ENCODE measurements at regions of chr17 and their contacts with region 1.

Region 1: DNA sequence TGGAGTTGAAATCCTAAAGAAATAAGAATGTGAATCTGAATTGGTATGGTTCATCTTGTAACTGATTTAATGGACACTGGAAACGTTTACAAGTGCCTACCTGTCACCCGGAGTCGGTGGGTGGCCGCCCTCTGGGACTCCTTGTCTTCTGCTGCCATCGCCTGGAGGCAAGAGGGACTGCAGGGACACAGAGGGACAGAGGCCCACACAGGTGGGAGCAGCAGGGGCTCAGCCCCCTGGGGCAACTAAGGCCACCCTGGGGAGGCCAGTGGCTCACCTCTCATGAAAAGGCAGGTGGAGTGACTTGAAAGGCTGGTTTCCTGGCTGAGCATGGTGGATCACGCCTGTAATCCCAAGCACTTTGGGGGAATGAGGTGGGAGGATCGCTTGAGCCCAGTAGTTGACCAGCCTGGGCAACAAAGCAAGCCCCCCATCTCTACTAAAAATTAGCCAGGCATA is 23.2 kb downstream of the TMEM92 start:
- DNase-seq: peak; percentile 69
- H3K4me3 ChIP-seq: no peak overlapping the region
- H3K27ac ChIP-seq: no peak overlapping the region
- H3K4me1 ChIP-seq: no peaks in the 10 kb centered on the region
- H3K27me3 ChIP-seq: no peaks in the 10 kb centered on the region
- CTCF ChIP-seq: peak; percentile 93

Region 2: GRCh38 chr17:50026901-50027630 is 270.4 kb before region 1 on chr17:
- CTCF ChIA-PET with region 1: no interaction called
- POLR2A ChIA-PET with region 1: no interaction called
- intact Hi-C with region 1: loop called (anchors 5 kb)
- DNase-seq: peak; percentile 67
- H3K4me3 ChIP-seq: no peak overlapping the region
- H3K27ac ChIP-seq: no peak overlapping the region
- H3K4me1 ChIP-seq: peaks cover 8% of the 10 kb centered on the region
- H3K27me3 ChIP-seq: no peaks in the 10 kb centered on the region
- CTCF ChIP-seq: peak; percentile 95

Region 3: DNA sequence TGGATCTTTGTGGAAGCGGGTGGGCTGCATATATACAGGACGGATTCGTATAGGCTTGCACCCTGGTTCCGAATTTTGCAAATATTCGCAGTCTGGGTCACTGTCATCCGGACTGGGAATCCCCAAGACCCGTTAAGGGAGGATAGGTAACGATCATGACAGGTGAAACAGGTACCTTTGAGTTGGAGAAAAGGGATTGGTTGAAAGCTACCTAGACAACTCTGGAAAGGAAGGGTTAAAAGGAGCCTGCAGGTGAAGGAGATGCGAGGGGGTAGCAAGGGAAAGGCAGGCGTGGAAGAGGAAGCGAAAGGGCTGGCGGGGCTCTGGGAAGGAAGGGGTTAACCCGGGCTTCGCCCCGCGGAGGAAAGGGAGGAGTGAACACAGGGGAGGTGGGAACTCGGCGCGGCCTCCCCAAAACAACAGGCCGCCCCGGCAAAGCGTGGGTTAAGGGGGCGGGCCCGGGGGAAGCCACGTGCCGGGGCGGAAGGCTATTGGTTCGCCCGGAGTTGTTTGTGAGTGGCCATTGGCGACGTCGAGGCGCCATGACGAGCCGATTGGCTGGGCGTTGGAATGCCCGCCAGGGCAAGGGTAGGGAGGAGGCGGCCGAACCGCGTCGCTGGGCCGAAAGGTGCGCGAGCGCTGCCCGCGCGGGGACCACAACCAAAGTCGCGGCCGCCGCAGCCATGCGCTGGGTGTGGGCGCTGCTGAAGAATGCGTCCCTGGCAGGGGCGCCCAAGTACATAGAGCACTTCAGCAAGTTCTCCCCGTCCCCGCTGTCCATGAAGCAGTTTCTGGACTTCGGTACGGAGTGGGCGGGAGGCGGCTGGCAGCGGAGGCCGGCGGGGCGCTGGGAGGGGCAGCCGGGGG is 202.4 kb before region 1 on chr17 and contains the start of gene PDK2:
- CTCF ChIA-PET with region 1: interaction called, 10 read pairs
- POLR2A ChIA-PET with region 1: no interaction called
- intact Hi-C with region 1: loop called (anchors 2 kb)
- DNase-seq: peak; percentile 99
- H3K4me3 ChIP-seq: peak within 1 kb of the TSS; percentile 77
- H3K27ac ChIP-seq: peak within 1 kb of the TSS; percentile 82
- H3K4me1 ChIP-seq: peaks cover 10% of the 10 kb centered on the region
- H3K27me3 ChIP-seq: no peaks in the 10 kb centered on the region
- CTCF ChIP-seq: no peak
- total RNA-seq, gene PDK2: 20.4 and 31.6 TPM in 2 replicates

Region 4: DNA sequence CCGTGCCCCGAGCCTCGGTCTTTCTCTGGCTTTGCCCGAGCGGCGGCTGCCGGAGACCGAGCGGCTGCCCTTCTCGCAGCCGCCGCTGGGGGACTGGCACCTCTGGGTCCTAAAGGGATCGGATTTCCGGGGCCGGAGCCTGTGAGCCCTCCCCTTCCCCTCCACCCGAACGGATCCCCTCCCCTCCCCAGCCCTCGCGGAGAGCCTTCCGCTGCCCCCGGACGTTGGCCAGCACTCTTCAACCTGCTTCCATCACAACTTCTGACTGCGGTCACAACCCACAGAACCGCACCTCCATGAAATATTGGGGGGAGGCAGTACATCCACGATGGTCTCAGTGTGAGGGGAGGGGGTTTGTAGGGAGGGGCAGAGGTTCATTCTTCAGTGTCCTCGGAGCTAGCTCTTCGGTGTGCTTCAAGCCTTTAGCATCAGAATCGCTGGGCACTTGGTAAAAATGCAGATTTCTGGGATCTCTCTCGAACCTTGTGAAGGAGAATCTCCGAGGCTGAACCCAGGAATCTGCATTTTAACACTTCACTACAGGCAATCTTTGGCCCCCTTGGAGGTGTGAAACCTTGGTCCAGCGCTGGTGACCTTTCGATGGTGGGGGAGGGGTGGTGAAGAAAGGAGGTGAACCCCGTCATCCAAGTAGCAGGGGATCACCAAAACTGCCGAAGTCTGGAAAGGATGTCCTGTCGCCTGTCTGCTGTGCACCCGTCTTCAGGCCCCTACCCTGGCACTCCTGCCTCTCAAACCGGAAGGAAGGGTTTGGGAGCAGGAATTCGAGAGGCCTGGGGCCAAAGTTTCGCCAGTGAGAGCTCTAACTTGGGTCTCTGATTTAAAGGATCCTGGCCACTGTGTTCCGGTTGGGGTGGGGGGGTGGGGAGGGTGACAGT is 146.1 kb before region 1 on chr17:
- CTCF ChIA-PET with region 1: interaction called, 10 read pairs
- POLR2A ChIA-PET with region 1: no interaction called
- intact Hi-C with region 1: no loop called
- DNase-seq: peak; percentile 95
- H3K4me3 ChIP-seq: peak overlapping the region; percentile 82
- H3K27ac ChIP-seq: peak overlapping the region; percentile 86
- H3K4me1 ChIP-seq: peaks cover 40% of the 10 kb centered on the region
- H3K27me3 ChIP-seq: no peaks in the 10 kb centered on the region
- CTCF ChIP-seq: peak; percentile 56

Region 5: DNA sequence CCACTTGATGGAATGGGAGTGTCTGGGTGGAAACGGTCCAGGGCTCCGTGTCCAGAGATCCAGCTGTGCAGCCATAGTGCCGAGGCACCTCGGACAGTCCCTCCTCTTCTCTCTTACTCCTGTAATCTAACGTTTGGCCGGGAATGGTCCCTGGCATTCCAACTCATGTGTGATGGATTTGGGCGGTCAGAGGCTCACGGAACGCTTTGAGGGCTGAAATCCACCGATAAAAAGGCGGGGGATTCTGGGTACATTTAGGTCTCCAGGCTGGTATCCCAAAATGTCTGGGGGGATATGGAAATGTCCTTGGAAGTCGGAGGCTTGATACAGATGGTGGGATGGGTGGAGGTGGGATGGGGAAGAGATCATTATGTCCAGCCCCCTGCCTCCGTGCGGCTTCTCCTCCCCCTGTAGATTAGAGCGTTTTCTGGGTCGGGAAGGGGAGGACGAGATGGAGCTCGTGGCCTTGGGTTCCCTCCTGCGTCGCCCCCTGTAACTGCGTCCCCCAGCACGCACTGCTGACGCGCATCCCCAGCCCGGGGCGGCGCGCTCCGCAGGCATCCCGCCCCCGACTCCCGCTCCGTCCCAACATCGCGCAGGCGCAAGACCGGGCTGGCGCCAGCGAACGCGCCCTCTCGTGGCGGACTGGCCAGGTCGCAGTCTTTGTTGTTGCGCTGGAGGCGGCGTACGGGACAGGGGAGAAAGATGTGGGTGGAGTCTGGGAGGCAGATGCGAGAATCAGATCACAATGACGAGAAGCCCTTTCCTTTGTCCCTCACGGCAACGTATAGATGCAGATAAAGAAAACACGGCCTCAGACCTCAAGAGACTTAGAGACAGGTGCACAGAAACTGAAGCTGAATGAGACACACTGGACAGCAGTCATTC is 136.2 kb before region 1 on chr17:
- CTCF ChIA-PET with region 1: no interaction called
- POLR2A ChIA-PET with region 1: no interaction called
- intact Hi-C with region 1: loop called (anchors 10 kb)
- DNase-seq: peak; percentile 96
- H3K4me3 ChIP-seq: peak overlapping the region; percentile 47
- H3K27ac ChIP-seq: peak overlapping the region; percentile 36
- H3K4me1 ChIP-seq: peaks cover 5% of the 10 kb centered on the region
- H3K27me3 ChIP-seq: no peaks in the 10 kb centered on the region
- CTCF ChIP-seq: peak; percentile 99

Region 6: DNA sequence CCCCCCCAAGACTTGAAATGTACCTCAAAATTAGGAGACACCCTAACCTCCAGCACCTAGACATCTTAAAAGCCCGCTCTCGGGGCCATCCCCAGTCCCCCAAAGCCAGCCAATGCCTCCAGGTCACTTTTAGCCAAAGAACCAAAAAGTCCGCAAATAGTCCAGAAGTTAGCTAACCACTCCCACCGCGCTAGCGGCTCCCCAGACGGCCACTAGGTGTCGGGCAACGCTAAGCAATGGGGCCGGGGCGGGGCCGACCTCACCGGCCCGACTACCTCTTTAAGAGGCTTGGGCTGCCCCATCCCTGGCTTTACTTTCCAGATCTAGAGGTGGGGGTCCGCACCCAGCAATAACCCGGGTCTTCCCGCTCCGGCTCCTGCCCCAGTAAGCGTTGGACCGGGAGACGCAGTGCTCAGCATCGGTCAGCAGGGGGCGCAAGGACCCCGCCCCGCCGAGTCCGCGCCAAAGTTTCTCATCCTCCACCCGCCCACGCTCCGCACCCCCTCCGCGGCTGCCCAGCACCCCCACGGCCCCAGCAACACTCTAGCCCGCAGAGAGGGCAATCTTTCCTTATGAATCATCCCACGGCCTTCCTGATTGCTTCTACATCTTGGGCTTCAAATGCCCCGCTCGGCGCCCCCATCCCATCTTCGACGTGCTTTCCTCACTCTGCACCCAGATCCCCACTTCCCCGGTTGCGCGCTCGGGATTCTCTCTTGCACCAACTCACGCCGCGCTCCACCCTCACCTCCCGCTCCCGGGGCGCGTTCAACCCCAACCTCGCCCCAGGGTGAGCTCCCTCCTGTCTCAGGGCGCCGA is 96.8 kb before region 1 on chr17:
- CTCF ChIA-PET with region 1: interaction called, 24 read pairs
- POLR2A ChIA-PET with region 1: no interaction called
- intact Hi-C with region 1: loop called (anchors 1 kb)
- DNase-seq: peak; percentile 92
- H3K4me3 ChIP-seq: peak overlapping the region; percentile 49
- H3K27ac ChIP-seq: no peak overlapping the region
- H3K4me1 ChIP-seq: peaks cover 27% of the 10 kb centered on the region
- H3K27me3 ChIP-seq: peaks cover 19% of the 10 kb centered on the region
- CTCF ChIP-seq: peak; percentile 100